ENCODE measurements at regions of chr2 and their contacts with region 1.

Region 1: GRCh38 chr2:207565736-207566500 is 36.2 kb downstream of the CREB1 start:
- DNase-seq: no peak
- ATAC-seq: no peak
- H3K4me3 ChIP-seq: no peak overlapping the region
- H3K27ac ChIP-seq: no peak overlapping the region
- H3K4me1 ChIP-seq: peaks cover 19% of the 10 kb centered on the region
- H3K27me3 ChIP-seq: no peaks in the 10 kb centered on the region
- CTCF ChIP-seq: no peak

Region 2: GRCh38 chr2:207529330-207530159 is 36.4 kb before region 1 on chr2 and contains the start of gene CREB1:
- intact Hi-C with region 1: loop called in 1 of 2 experiments (anchors 5 kb)
- DNase-seq: peak; percentile 99
- ATAC-seq: peak; percentile 96 to 98 (median 97)
- H3K4me3 ChIP-seq: peak within 1 kb of the TSS; percentile 89
- H3K27ac ChIP-seq: peak within 1 kb of the TSS; percentile 92
- H3K4me1 ChIP-seq: peaks cover 29% of the 10 kb centered on the region
- H3K27me3 ChIP-seq: no peaks in the 10 kb centered on the region
- CTCF ChIP-seq: no peak
- total RNA-seq, gene CREB1: 18.4 to 27.9 (median 22.9) TPM

Measured in psoas muscle (tissue), 8 donors.